Ovary (tissue), 10 donors: ENCODE measurements at regions of chr5 and their contacts with region 1.

Region 1: DNA sequence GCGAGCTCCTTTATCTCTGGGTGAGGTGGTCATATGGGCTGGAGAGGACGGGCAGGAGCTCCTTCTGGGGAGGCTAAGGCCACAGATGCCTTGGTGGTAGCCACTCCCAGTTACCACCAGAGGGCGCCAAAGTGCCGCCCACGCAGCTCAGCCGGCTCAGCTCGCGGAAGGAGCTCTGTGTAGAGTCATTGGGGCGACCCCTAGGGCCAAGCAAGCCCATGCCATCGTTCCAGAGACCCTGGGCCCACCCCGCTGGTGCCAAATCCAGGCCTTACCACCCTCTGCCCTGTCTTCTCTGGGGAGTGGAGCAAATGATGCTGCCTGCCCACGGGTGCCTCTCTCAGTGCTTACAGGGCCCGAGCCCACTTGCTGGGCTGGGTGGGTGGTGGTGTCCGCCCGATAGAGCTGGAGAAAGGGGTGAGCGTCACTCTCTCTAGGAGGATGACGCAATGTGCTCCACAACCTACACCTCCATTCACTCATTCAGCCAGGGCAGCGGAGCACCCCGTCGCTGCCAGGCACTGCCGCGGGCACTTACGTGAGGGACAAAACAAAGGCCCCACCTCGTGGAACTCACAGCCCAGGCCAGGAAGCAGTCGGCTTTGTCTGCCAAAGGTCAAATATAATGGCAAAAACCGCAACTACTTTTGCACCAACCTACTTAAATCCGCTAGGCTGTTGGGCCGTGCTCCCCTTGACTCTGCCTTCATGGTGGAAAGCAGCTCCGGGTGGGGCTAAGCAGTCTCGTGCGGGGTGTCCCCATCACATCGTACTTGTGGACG is 13.8 kb downstream of the TSPAN17 start:
- DNase-seq: peak; percentile 63 to 84 (median 78)
- H3K4me3 ChIP-seq: no peak overlapping the region
- H3K27ac ChIP-seq: no peak overlapping the region
- H3K4me1 ChIP-seq: peaks cover 9% of the 10 kb centered on the region
- H3K27me3 ChIP-seq: no peaks in the 10 kb centered on the region
- CTCF ChIP-seq: peak; percentile 75 to 94 (median 77)
- EP300 ChIP-seq: no peak
- POLR2A ChIP-seq: no peak

Region 2: GRCh38 chr5:176629853-176630712 is 31.0 kb before region 1 on chr5 and contains the starts of genes EIF4E1B and SNCB:
- intact Hi-C with region 1: no loop called
- DNase-seq: no peak
- H3K4me3 ChIP-seq: no peak within 1 kb of the TSS
- H3K27ac ChIP-seq: no peak within 1 kb of the TSS
- H3K4me1 ChIP-seq: peaks cover 7% of the 10 kb centered on the region
- H3K27me3 ChIP-seq: no peaks in the 10 kb centered on the region
- CTCF ChIP-seq: no peak
- EP300 ChIP-seq: no peak
- POLR2A ChIP-seq: no peak
- total RNA-seq, gene EIF4E1B: not detected
- total RNA-seq, gene SNCB: not detected

Region 3: DNA sequence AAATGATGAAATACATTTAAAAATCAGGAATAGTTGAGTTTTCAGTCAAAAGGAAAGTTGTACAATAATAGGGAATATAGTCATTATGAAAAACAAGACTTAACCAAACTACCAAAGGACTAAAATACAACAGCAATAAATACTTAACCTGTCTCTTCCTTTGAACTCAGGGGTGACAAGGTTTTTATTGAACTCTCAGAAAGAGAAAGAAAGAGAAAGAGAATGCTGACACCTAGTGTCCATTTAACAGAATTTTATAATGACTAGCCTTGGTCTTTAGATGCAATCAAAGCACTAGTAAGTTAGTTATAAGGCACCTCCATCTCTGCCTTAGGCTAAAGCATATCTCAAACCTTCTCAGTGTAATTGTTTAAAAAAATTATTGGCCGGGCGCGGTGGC is 298.0 kb after region 1 on chr5:
- intact Hi-C with region 1: loop called in 1 of 4 experiments (anchors 10 kb)
- DNase-seq: no peak
- H3K4me3 ChIP-seq: no peak overlapping the region
- H3K27ac ChIP-seq: no peak overlapping the region
- H3K4me1 ChIP-seq: no peaks in the 10 kb centered on the region
- H3K27me3 ChIP-seq: no peaks in the 10 kb centered on the region
- CTCF ChIP-seq: no peak
- EP300 ChIP-seq: no peak
- POLR2A ChIP-seq: no peak